ENCODE measurements at regions of chr12 and their contacts with region 1.

Region 1: GRCh38 chr12:111330800-111331752 is 37.8 kb downstream of the PHETA1 start:
- DNase-seq: no peak
- ATAC-seq: peak; percentile 80
- H3K4me3 Mint-ChIP-seq: no peak overlapping the region
- H3K27ac Mint-ChIP-seq: no peak overlapping the region; the same call in 1 of the 2 replicates
- H3K4me1 Mint-ChIP-seq: 0 out of 2 replicates have a peak, but pooled peaks cover 3% of the 10 kb centered on the region
- H3K27me3 Mint-ChIP-seq: no peaks in the 10 kb centered on the region
- CTCF ChIP-seq: no peak

Region 2: GRCh38 chr12:111224186-111225066 is 106.7 kb before region 1 on chr12:
- CTCF ChIA-PET with region 1: no interaction called
- POLR2A ChIA-PET with region 1: no interaction called
- DNase-seq: no peak
- ATAC-seq: no peak
- H3K4me3 Mint-ChIP-seq: no peak overlapping the region
- H3K27ac Mint-ChIP-seq: no peak overlapping the region
- H3K4me1 Mint-ChIP-seq: peaks cover 18% of the 10 kb centered on the region
- H3K27me3 Mint-ChIP-seq: no peaks in the 10 kb centered on the region
- CTCF ChIP-seq: no peak

Region 3: DNA sequence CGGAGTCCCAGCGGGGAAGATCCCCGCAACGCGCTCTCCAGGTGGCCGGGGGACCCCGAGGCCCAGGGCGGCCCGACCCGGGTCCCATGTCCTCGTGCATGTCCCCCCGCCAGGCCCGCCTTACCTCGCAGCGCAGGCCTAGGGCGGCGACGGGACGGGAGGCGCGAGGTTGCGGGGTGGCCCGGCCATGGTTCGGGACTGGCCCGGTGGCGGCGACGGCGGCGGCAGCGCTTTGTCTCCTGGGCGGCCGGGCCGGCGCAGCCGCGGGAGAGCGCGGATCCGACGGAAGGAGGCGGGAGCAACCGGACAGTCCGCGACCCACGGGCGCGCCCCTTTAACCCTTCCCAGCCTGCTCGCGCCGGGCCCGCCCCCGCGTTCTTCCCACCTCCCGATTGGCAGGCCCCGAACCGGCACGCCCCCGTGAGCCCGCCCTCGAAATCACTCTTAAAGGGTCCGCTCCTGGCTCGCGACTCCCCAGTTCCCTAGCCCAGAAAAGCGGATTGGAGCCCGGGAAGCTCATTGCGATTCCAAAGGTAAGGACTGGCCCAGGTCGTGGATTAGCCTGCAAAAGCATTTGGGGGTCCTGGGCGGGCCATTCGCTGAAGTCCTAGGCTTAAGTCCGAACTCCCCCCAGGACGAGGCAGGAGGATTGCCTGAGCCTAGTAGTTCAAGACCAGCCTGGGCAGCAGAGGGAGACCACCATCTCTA is 37.9 kb after region 1 on chr12 and contains the start of gene PHETA1:
- CTCF ChIA-PET with region 1: interaction called, 12 read pairs
- POLR2A ChIA-PET with region 1: no interaction called
- DNase-seq: peak; percentile 95
- ATAC-seq: peak; percentile 94
- H3K4me3 Mint-ChIP-seq: peak within 1 kb of the TSS; percentile 72
- H3K27ac Mint-ChIP-seq: 0 out of 2 replicates have a peak within 1 kb of the TSS, but pooled peaks have one; percentile 27
- H3K4me1 Mint-ChIP-seq: peaks cover 10% of the 10 kb centered on the region
- H3K27me3 Mint-ChIP-seq: peaks cover 30% of the 10 kb centered on the region
- CTCF ChIP-seq: no peak
- total RNA-seq, gene PHETA1: 12.4 to 18.6 TPM (median 14.9 TPM) in 3 replicates

Measured in WTC11 (cell line).